Ascending aorta (tissue), 2 donors: ENCODE measurements at regions of chr2 and their contacts with region 1.

Region 1: DNA sequence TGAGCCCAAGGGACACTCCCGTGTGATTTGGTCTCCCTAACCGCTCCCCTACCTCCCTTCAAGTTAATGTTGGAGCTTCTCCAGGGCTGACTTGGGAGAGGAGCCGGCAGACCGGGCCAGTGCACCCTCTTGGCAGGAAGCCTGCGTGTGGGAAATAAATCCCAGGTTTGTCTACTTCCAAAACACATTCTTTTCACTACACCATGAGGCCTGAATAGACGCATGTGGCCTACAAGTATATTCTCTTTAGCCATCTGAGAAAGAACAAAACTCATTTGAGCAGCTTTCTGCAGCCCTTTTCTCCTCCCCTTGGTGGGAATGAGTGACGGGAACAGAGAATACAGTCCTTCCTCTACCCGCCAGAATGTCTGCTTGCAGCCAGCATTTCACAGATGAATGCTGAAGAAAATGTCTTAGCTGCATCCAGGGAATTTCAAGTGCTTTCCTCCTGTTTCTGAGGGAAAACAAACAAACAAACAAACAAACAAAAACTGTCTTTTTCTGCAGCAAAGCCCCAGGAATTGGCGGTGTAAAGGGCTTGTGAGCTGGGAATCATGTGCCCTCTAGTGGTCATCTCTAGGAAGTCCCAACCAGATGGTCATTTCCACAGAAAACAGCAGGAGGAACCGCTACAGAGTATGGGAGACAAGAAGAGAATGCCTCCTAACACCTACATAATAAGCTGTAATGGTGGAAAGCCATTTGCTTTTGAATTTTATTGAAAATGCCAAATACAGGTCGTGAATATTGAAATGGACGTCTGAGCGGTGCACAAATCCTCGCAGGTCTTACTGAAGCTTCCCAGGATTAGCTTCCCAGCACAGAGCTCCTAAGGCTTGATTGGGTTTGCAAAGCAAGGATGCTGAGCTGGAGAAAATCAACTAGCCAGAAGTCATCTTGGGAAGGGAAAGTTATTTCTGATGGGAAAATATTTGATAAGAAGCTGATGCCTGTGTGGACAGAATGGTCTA is 41.2 kb upstream of the DAPL1 start:
- DNase-seq: no peak
- H3K4me3 ChIP-seq: peak overlapping the region in 1 of 2 donors; percentile 57
- H3K27ac ChIP-seq: no peak overlapping the region
- H3K4me1 ChIP-seq: peaks cover 0 to 6% of the 10 kb centered on the region in 2 donors
- H3K27me3 ChIP-seq: no peaks in the 10 kb centered on the region
- CTCF ChIP-seq: peak; percentile 61 to 87 (median 81)

Region 2: GRCh38 chr2:158024288-158024898 is 729.5 kb before region 1 on chr2:
- intact Hi-C with region 1: loop called (anchors 5 kb)
- DNase-seq: no peak
- H3K4me3 ChIP-seq: no peak overlapping the region
- H3K27ac ChIP-seq: no peak overlapping the region
- H3K4me1 ChIP-seq: no peaks in the 10 kb centered on the region
- H3K27me3 ChIP-seq: no peaks in the 10 kb centered on the region
- CTCF ChIP-seq: peak; percentile 34 to 78 (median 77)

Region 3: DNA sequence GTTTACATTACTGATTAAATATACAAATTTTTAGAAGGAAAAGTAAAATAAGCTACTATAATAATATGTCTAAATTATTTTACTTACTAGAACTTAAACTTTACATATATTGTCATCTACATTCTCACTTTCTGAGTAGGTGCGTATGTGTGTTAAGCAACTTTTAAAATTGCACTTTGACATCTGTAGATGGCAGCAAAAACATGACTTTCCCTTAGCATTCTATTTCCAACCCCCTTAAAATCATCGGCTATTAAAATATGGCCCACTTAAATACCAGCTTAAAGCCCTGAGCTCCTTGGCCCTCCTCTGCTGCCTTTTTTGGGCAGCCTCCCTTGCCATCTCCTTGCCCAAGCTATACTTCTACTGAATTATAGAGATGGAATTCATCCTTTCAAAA is 574.3 kb before region 1 on chr2:
- intact Hi-C with region 1: loop called (anchors 10 kb)
- DNase-seq: no peak
- H3K4me3 ChIP-seq: no peak overlapping the region
- H3K27ac ChIP-seq: no peak overlapping the region
- H3K4me1 ChIP-seq: no peaks in the 10 kb centered on the region
- H3K27me3 ChIP-seq: no peaks in the 10 kb centered on the region
- CTCF ChIP-seq: no peak